PC-3 (cell line): ENCODE measurements at regions of chr6 and their contacts with region 1.

Region 1: DNA sequence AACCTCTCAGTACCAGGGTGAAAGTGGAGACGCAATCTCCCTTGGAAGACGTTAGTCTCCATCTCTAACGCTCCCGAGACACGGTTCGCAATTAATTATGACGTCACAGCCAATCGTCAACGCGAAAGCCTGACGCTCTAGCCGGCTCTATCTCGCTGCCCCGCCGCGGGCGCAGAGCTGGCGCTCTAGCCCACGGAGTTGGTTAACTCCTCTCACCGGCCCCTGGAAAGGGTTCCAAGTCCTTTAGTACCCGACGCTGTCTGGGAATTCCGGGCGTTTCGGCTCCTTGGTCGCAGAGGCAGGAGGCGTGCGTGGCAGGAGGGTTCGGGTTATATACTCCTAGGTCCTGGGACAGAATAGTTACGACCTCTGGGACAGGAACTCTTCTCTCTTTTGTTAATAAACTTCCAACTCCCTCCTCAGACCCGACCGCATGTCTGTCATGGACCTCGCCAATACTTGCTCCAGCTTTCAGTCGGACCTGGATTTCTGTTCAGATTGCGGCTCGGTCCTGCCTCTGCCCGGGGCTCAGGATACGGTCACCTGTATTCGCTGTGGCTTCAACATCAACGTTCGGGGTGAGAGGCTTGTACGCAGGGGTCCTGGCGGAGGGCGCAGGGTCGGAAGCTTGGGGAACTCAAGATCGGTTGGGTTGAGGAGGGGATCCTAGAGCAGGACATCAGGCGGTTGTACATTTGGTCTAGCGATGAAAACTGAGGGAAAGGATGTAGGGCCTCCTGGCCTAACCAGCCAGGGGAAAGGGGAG is at the start of gene POLR1H:
- DNase-seq: peak; percentile 99
- ATAC-seq: peak; percentile 96
- H3K4me3 ChIP-seq: peak within 1 kb of the TSS; percentile 96
- H3K27ac ChIP-seq: peak within 1 kb of the TSS; percentile 46
- H3K4me1 ChIP-seq: peaks cover 26% of the 10 kb centered on the region
- H3K27me3 ChIP-seq: no peaks in the 10 kb centered on the region
- CTCF ChIP-seq: no peak
- total RNA-seq, gene POLR1H: 26.3 and 40.0 TPM in 2 replicates

Region 2: DNA sequence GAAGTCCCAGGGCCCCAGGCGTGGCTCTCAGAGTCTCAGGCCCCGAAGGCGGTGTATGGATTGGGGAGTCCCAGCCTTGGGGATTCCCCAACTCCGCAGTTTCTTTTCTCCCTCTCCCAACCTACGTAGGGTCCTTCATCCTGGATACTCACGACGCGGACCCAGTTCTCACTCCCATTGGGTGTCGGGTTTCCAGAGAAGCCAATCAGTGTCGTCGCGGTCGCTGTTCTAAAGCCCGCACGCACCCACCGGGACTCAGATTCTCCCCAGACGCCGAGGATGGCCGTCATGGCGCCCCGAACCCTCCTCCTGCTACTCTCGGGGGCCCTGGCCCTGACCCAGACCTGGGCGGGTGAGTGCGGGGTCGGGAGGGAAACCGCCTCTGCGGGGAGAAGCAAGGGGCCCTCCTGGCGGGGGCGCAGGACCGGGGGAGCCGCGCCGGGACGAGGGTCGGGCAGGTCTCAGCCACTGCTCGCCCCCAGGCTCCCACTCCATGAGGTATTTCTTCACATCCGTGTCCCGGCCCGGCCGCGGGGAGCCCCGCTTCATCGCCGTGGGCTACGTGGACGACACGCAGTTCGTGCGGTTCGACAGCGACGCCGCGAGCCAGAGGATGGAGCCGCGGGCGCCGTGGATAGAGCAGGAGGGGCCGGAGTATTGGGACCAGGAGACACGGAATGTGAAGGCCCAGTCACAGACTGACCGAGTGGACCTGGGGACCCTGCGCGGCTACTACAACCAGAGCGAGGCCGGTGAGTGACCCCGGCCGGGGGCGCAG is 118.8 kb before region 1 on chr6 and contains the start of gene HLA-A:
- CTCF ChIA-PET with region 1: no interaction called
- POLR2A ChIA-PET with region 1: no interaction called
- intact Hi-C with region 1: loop called (anchors 2 kb)
- DNase-seq: peak; percentile 95
- ATAC-seq: peak; percentile 97
- H3K4me3 ChIP-seq: peak within 1 kb of the TSS; percentile 87
- H3K27ac ChIP-seq: peak within 1 kb of the TSS; percentile 19; the same call in 1 of the 2 replicates
- H3K4me1 ChIP-seq: 0 out of 2 replicates have a peak, but pooled peaks cover 14% of the 10 kb centered on the region
- H3K27me3 ChIP-seq: no peaks in the 10 kb centered on the region
- CTCF ChIP-seq: no peak; the same call in 1 of the 2 replicates
- total RNA-seq, gene HLA-A: 426 and 435 TPM in 2 replicates

Region 3: DNA sequence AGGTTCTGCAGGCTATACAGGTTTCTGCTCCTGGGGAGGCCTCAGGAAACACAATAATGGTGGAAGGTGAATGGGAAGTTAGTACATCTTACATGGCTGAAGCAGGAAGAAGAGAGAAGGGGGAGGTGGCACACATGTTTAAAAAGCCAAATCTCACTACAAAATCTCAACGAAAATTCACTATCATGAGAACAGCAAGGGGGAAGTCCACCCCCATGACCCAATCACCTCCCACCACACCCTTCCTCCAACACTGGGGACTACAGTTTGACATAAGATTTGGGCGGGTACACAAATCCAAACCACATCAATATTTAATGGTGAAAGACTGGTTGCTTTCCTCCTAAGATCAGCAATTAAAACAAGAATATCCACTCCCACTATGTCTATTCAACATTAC is 14.1 kb before region 1 on chr6:
- CTCF ChIA-PET with region 1: interaction called, 12 read pairs
- POLR2A ChIA-PET with region 1: no interaction called
- intact Hi-C with region 1: no loop called
- DNase-seq: no peak
- ATAC-seq: no peak
- H3K4me3 ChIP-seq: no peak overlapping the region
- H3K27ac ChIP-seq: no peak overlapping the region
- H3K4me1 ChIP-seq: peaks cover 9% of the 10 kb centered on the region
- H3K27me3 ChIP-seq: no peaks in the 10 kb centered on the region
- CTCF ChIP-seq: no peak